ENCODE measurements at regions of chr7 and their contacts with region 1.

Region 1: GRCh38 chr7:139602143-139602722 is 78.7 kb downstream of the CLEC2L start:
- DNase-seq: peak; percentile 34
- H3K4me3 Mint-ChIP-seq: no peak overlapping the region
- H3K27ac Mint-ChIP-seq: no peak overlapping the region
- H3K4me1 Mint-ChIP-seq: no peaks in the 10 kb centered on the region
- H3K27me3 Mint-ChIP-seq: no peaks in the 10 kb centered on the region

Region 2: DNA sequence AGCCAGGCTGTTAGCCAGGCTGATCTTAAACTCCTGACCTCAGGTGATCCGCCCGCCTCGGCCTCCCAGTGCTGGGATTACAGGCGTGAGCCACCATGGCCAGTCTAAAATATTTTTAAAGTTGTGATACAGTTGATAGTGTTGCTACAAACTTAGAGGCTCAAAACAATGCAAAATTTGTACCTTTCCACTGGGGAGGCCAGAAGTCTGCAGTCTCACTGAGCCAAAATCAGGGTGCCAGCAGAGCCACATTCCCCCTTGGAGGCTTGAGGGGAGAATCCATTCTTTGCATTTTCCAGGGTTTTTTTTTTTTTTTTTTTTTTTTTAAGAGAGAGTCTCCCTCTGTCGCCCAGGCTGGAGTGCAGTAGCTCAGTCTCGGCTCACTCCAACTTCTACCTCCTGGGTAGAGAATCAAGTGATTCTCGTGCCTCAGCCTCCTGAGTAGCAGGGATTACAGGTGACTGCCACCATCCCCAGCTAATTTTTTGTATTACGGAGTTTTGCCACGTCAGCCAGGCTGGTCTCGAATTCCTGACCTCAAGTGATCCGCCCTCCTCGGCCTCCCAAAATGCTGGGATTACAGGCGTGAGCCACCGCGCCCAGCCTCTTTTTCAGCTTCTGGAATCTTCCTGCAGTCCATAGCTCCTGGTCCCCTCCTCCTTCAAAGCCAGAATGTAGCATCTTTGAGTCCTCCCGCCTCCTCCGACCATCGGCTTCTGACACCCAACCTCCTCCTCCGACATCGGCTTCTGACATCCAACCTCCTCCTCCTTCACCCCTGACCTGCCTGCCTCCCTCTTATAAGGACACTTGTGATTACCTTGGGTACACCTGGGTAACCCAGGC is 156.0 kb before region 1 on chr7:
- CTCF ChIA-PET with region 1: no interaction called
- POLR2A ChIA-PET with region 1: no interaction called
- DNase-seq: no peak
- H3K4me3 Mint-ChIP-seq: no peak overlapping the region
- H3K27ac Mint-ChIP-seq: no peak overlapping the region
- H3K4me1 Mint-ChIP-seq: peaks cover 2% of the 10 kb centered on the region
- H3K27me3 Mint-ChIP-seq: no peaks in the 10 kb centered on the region

Region 3: DNA sequence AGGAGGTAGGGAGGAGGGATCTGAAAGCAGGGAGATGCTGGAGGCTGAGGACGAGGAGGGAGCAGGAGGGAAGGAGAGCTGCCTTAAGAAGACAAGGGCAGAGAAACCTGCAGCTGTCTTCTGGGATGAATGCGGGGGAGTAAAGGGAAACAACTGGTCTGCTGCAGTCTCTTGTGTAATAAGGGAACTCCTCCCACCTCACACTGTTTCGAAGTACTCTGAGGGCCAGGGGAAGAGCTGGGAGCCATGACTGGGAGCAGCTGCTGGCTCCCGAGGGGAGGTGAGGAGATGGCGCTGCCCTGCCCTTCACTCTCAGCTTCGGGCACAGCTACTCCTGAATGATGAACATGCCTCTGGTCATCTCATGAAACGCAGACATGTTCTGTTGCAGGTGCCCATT is 13.6 kb before region 1 on chr7:
- CTCF ChIA-PET with region 1: interaction called, 29 read pairs
- POLR2A ChIA-PET with region 1: no interaction called
- DNase-seq: no peak
- H3K4me3 Mint-ChIP-seq: no peak overlapping the region
- H3K27ac Mint-ChIP-seq: no peak overlapping the region
- H3K4me1 Mint-ChIP-seq: peaks cover 7% of the 10 kb centered on the region
- H3K27me3 Mint-ChIP-seq: no peaks in the 10 kb centered on the region

Region 4: GRCh38 chr7:139620676-139621344 is 18.6 kb after region 1 on chr7:
- CTCF ChIA-PET with region 1: interaction called, 18 read pairs
- POLR2A ChIA-PET with region 1: no interaction called
- DNase-seq: peak; percentile 67
- H3K4me3 Mint-ChIP-seq: no peak overlapping the region
- H3K27ac Mint-ChIP-seq: no peak overlapping the region
- H3K4me1 Mint-ChIP-seq: peaks cover 22% of the 10 kb centered on the region
- H3K27me3 Mint-ChIP-seq: no peaks in the 10 kb centered on the region